ENCODE measurements at regions of chr2 and their contacts with region 1.

Region 1: GRCh38 chr2:38750891-38751595 is at the start of gene SRSF7:
- DNase-seq: peak; percentile 97
- ATAC-seq: peak; percentile 80
- H3K4me3 ChIP-seq: peak within 1 kb of the TSS; percentile 83 to 94 (median 85)
- H3K27ac ChIP-seq: peak within 1 kb of the TSS; percentile 87
- H3K4me1 ChIP-seq: peaks cover 64% of the 10 kb centered on the region
- H3K27me3 ChIP-seq: no peaks in the 10 kb centered on the region; a peak in 1 of 5 replicates
- CTCF ChIP-seq: no peak
- EP300 ChIP-seq: peak in 1 of 2 experiments; percentile 45; a peak in 2 of 4 replicates
- POLR2A ChIP-seq: peak; percentile 100
- RAD21 ChIP-seq: peak; percentile 56; the same call in 1 of the 2 replicates
- total RNA-seq, gene SRSF7: 275 and 377 TPM in 2 replicates

Region 2: GRCh38 chr2:38535744-38536506 is 215.1 kb before region 1 on chr2:
- CTCF ChIA-PET with region 1: no interaction called
- POLR2A ChIA-PET with region 1: interaction called, 23 read pairs
- in situ Hi-C with region 1: no loop called
- intact Hi-C with region 1: no loop called
- DNase-seq: peak; percentile 67
- ATAC-seq: peak; percentile 86
- H3K4me3 ChIP-seq: peak overlapping the region; percentile 65 to 78 (median 67)
- H3K27ac ChIP-seq: no peak overlapping the region
- H3K4me1 ChIP-seq: peaks cover 55% of the 10 kb centered on the region
- H3K27me3 ChIP-seq: 0 out of 5 replicates have a peak, but pooled peaks cover 0 to 1% of the 10 kb centered on the region in 2 experiments
- CTCF ChIP-seq: peak; percentile 100
- EP300 ChIP-seq: no peak
- POLR2A ChIP-seq: no peak
- RAD21 ChIP-seq: peak; percentile 98

Region 3: GRCh38 chr2:38602732-38603401 is 148.2 kb before region 1 on chr2 and contains the start of gene HNRNPLL:
- CTCF ChIA-PET with region 1: no interaction called
- POLR2A ChIA-PET with region 1: interaction called, 65 read pairs
- in situ Hi-C with region 1: no loop called
- intact Hi-C with region 1: no loop called
- DNase-seq: peak; percentile 96
- ATAC-seq: peak; percentile 90
- H3K4me3 ChIP-seq: peak within 1 kb of the TSS; percentile 95 to 98 (median 97)
- H3K27ac ChIP-seq: peak within 1 kb of the TSS; percentile 92
- H3K4me1 ChIP-seq: peaks cover 47% of the 10 kb centered on the region
- H3K27me3 ChIP-seq: no peaks in the 10 kb centered on the region; a peak in 2 of 5 replicates
- CTCF ChIP-seq: peak; percentile 18; the same call in 1 of the 2 replicates
- EP300 ChIP-seq: no peak
- POLR2A ChIP-seq: peak; percentile 97
- RAD21 ChIP-seq: peak; percentile 40
- total RNA-seq, gene HNRNPLL: 91.9 and 103 TPM in 2 replicates

Region 4: DNA sequence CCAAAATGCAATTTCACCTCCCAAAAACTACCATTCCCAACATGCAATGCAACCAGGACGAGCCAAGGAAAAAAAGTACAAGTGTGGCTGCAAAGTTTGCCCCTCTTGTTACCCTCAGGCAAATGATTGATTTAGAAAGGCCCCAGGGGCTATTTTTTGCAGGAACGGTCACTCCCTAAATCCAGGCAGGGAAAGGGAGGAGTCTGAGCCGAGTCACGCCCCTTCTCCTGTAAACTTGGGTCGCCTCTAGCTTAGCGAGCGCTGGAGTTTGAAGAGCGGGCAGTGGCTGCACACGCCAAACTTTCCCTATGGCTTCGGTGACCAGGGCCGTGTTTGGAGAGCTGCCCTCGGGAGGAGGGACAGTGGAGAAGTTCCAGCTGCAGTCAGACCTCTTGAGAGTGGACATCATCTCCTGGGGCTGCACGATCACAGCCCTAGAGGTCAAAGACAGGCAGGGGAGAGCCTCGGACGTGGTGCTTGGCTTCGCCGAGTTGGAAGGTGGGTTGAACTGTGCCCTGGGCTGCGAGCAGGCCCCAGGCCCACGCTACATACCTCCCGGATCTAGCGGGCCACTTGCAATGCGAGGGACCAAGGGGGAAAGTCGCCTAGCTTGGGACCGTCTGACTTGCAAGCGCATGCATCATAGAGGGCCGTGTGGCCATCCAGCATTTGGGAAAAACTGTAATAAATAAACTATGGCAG is 85.0 kb before region 1 on chr2 and contains the start of gene GALM:
- CTCF ChIA-PET with region 1: no interaction called
- POLR2A ChIA-PET with region 1: interaction called, 27 read pairs
- in situ Hi-C with region 1: no loop called
- intact Hi-C with region 1: no loop called
- DNase-seq: peak; percentile 99
- ATAC-seq: peak; percentile 94
- H3K4me3 ChIP-seq: peak within 1 kb of the TSS; percentile 70 to 90 (median 85)
- H3K27ac ChIP-seq: peak within 1 kb of the TSS; percentile 88
- H3K4me1 ChIP-seq: peaks cover 52% of the 10 kb centered on the region
- H3K27me3 ChIP-seq: no peaks in the 10 kb centered on the region; a peak in 1 of 5 replicates
- CTCF ChIP-seq: 0 out of 2 replicates have a peak, but pooled peaks have one; percentile 15
- EP300 ChIP-seq: peak in 1 of 2 experiments; percentile 24; a peak in 2 of 4 replicates
- POLR2A ChIP-seq: peak; percentile 93 to 99
- RAD21 ChIP-seq: no peak
- total RNA-seq, gene GALM: 90.0 and 114 TPM in 2 replicates

Region 5: DNA sequence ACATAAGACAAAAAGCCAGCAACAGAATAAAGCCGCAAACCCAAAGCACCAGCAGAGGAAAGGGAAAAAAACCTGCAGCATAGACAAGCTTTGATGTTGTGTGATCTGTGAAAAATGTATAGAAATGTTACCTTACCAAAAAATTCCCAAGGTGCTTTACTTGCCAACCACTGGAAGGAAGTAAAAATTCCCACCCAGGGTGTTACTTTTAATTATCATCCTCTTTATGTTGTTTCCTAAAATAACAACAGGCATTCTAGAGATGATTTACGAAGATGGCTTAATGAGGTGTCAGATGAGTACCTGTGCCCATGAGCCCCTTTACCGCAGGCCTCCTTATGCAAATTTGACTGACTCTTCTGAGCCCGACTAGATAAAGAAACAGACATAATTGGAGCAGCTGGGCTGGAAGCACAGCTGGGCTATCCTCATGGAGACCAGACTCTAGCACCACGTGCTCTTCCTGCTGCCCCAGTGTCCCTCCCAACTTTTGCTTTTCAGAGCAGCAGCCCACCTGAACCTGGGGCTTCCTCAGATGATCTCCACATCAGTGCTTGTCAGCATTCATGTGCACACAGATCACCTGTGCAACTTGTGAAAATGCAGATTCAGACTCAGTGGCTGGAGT is 41.4 kb before region 1 on chr2:
- CTCF ChIA-PET with region 1: no interaction called
- POLR2A ChIA-PET with region 1: no interaction called
- in situ Hi-C with region 1: no loop called
- intact Hi-C with region 1: no loop called
- DNase-seq: no peak
- ATAC-seq: no peak
- H3K4me3 ChIP-seq: no peak overlapping the region
- H3K27ac ChIP-seq: no peak overlapping the region
- H3K4me1 ChIP-seq: no peaks in the 10 kb centered on the region
- H3K27me3 ChIP-seq: no peaks in the 10 kb centered on the region
- CTCF ChIP-seq: no peak
- EP300 ChIP-seq: no peak
- POLR2A ChIP-seq: no peak
- RAD21 ChIP-seq: no peak

Region 6: GRCh38 chr2:38734299-38735058 is 16.6 kb before region 1 on chr2:
- CTCF ChIA-PET with region 1: no interaction called
- POLR2A ChIA-PET with region 1: interaction called, 92 read pairs
- in situ Hi-C with region 1: no loop called
- intact Hi-C with region 1: no loop called
- DNase-seq: no peak
- ATAC-seq: no peak
- H3K4me3 ChIP-seq: no peak overlapping the region
- H3K27ac ChIP-seq: peak overlapping the region; percentile 40
- H3K4me1 ChIP-seq: peaks cover 66% of the 10 kb centered on the region
- H3K27me3 ChIP-seq: no peaks in the 10 kb centered on the region
- CTCF ChIP-seq: no peak
- EP300 ChIP-seq: no peak
- POLR2A ChIP-seq: no peak
- RAD21 ChIP-seq: no peak

Region 7: GRCh38 chr2:38771632-38772031 is 20.6 kb after region 1 on chr2:
- CTCF ChIA-PET with region 1: no interaction called
- POLR2A ChIA-PET with region 1: interaction called, 46 read pairs
- in situ Hi-C with region 1: no loop called
- intact Hi-C with region 1: no loop called
- DNase-seq: no peak
- ATAC-seq: no peak
- H3K4me3 ChIP-seq: peak overlapping the region in 1 of 3 experiments; percentile 11; a peak in 1 of 6 replicates
- H3K27ac ChIP-seq: no peak overlapping the region
- H3K4me1 ChIP-seq: peaks cover 54% of the 10 kb centered on the region
- H3K27me3 ChIP-seq: no peaks in the 10 kb centered on the region
- CTCF ChIP-seq: no peak
- EP300 ChIP-seq: no peak
- POLR2A ChIP-seq: no peak
- RAD21 ChIP-seq: no peak

Region 8: GRCh38 chr2:39124000-39124745 is 373.1 kb after region 1 on chr2:
- CTCF ChIA-PET with region 1: no interaction called
- POLR2A ChIA-PET with region 1: no interaction called
- in situ Hi-C with region 1: no loop called
- intact Hi-C with region 1: loop called (anchors 10 kb)
- DNase-seq: peak; percentile 97
- ATAC-seq: peak; percentile 79
- H3K4me3 ChIP-seq: peak overlapping the region; percentile 81 to 82 (median 81)
- H3K27ac ChIP-seq: peak overlapping the region; percentile 93
- H3K4me1 ChIP-seq: peaks cover 47% of the 10 kb centered on the region
- H3K27me3 ChIP-seq: no peaks in the 10 kb centered on the region; a peak in 1 of 5 replicates
- CTCF ChIP-seq: peak; percentile 93
- EP300 ChIP-seq: peak; percentile 43 to 78; a peak in 2 of 4 replicates
- POLR2A ChIP-seq: peak; percentile 85 to 90
- RAD21 ChIP-seq: peak; percentile 72

Measured in HepG2 (cell line).